CD14-positive monocyte (primary cell): ENCODE measurements at regions of chr11 and their contacts with region 1.

Region 1: GRCh38 chr11:102007567-102008437 is 39.4 kb upstream of the CFAP300 start:
- DNase-seq: peak in 1 of 3 donors; percentile 18
- H3K4me3 ChIP-seq: no peak overlapping the region
- H3K4me3 Mint-ChIP-seq: no peak overlapping the region
- H3K27ac ChIP-seq: no peak overlapping the region
- H3K27ac Mint-ChIP-seq: no peak overlapping the region
- H3K4me1 ChIP-seq: no peaks in the 10 kb centered on the region
- H3K4me1 Mint-ChIP-seq: no peaks in the 10 kb centered on the region
- H3K27me3 ChIP-seq: peaks cover 7 to 14% of the 10 kb centered on the region in 2 donors
- H3K27me3 Mint-ChIP-seq: peaks cover 6 to 13% (median 11%) of the 10 kb centered on the region in 3 donors
- CTCF ChIP-seq: peak; percentile 69

Region 2: DNA sequence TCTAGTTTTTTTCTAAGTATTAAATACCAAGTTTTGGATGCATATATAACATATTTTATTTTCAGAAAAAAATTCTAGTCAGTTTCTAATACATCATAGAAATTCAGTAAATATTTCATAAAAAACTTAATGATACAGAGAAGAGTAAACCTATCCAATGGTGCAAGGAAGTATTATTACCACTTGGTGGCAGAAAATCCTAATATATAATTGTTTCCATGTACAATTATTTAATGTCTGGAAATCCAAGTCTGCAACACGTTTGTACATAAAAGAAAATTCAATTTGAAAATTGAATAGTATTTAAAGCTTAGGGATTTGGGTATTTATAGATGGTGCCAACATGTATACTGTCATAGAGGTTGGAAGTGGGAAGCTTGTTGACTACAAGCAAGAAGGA is 551.0 kb before region 1 on chr11:
- intact Hi-C with region 1: loop called in 1 of 2 experiments (anchors 10 kb)
- DNase-seq: no peak
- H3K4me3 ChIP-seq: no peak overlapping the region
- H3K4me3 Mint-ChIP-seq: no peak overlapping the region
- H3K27ac ChIP-seq: no peak overlapping the region
- H3K27ac Mint-ChIP-seq: no peak overlapping the region
- H3K4me1 ChIP-seq: no peaks in the 10 kb centered on the region
- H3K4me1 Mint-ChIP-seq: no peaks in the 10 kb centered on the region
- H3K27me3 ChIP-seq: no peaks in the 10 kb centered on the region
- H3K27me3 Mint-ChIP-seq: peaks cover 0 to 1% (median 1%) of the 10 kb centered on the region in 3 donors
- CTCF ChIP-seq: no peak

Region 3: GRCh38 chr11:101583251-101584128 is 424.3 kb before region 1 on chr11 and contains the start of gene TRPC6:
- intact Hi-C with region 1: no loop called
- DNase-seq: no peak
- H3K4me3 ChIP-seq: no peak within 1 kb of the TSS
- H3K4me3 Mint-ChIP-seq: peak within 1 kb of the TSS in 1 of 2 donors; percentile 75
- H3K27ac ChIP-seq: no peak within 1 kb of the TSS
- H3K27ac Mint-ChIP-seq: no peak within 1 kb of the TSS
- H3K4me1 ChIP-seq: no peaks in the 10 kb centered on the region
- H3K4me1 Mint-ChIP-seq: no peaks in the 10 kb centered on the region
- H3K27me3 ChIP-seq: peaks cover 28 to 39% of the 10 kb centered on the region in 2 donors
- H3K27me3 Mint-ChIP-seq: peaks cover 33 to 44% (median 39%) of the 10 kb centered on the region in 3 donors
- CTCF ChIP-seq: no peak
- polyA plus RNA-seq, gene TRPC6: 0.01 TPM in 1 of 3 donors, not detected in the others

Region 4: DNA sequence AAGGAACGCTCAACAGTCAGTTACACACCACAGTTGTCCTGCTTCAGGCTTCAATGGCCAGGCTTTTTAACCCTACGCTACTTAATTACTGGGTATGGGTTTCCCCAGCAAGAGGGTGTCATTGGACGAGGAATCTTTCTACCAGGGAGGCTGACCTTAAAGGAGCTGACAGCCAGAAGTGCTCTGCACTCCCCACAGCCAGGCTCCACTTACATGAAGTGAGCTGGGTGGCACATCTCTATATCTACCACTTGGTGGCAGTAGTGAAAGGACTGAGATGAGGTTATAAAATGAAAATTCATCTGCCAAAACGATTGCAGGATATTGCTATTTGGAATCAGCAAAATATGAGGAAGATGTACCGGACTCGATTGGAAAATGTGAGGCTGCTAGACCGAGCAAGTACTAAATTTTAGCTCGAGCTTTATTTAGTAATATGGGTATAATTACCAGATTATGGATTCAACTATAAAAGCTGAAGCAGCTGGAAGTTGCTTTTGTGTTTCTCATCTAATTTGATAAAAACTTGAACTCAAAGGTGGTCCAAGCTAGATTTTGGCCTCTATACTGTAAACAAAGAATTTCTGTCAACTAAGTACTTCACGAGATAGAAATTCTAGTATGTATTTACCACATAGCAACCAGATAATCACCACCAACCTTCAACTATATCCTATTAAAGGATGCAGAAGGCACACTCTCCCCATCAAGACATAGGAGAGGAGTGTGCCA is 146.9 kb before region 1 on chr11:
- intact Hi-C with region 1: loop called (anchors 10 kb)
- DNase-seq: peak in 2 of 3 donors; percentile 2
- H3K4me3 ChIP-seq: no peak overlapping the region
- H3K4me3 Mint-ChIP-seq: no peak overlapping the region
- H3K27ac ChIP-seq: no peak overlapping the region
- H3K27ac Mint-ChIP-seq: no peak overlapping the region
- H3K4me1 ChIP-seq: no peaks in the 10 kb centered on the region
- H3K4me1 Mint-ChIP-seq: no peaks in the 10 kb centered on the region
- H3K27me3 ChIP-seq: no peaks in the 10 kb centered on the region
- H3K27me3 Mint-ChIP-seq: peaks cover 0 to 2% (median 0%) of the 10 kb centered on the region in 3 donors
- CTCF ChIP-seq: peak; percentile 56

Region 5: GRCh38 chr11:101929294-101929916 is 78.4 kb before region 1 on chr11:
- intact Hi-C with region 1: no loop called
- DNase-seq: no peak
- H3K4me3 ChIP-seq: no peak overlapping the region
- H3K4me3 Mint-ChIP-seq: no peak overlapping the region
- H3K27ac ChIP-seq: no peak overlapping the region
- H3K27ac Mint-ChIP-seq: no peak overlapping the region
- H3K4me1 ChIP-seq: no peaks in the 10 kb centered on the region
- H3K4me1 Mint-ChIP-seq: no peaks in the 10 kb centered on the region
- H3K27me3 ChIP-seq: no peaks in the 10 kb centered on the region
- H3K27me3 Mint-ChIP-seq: no peaks in the 10 kb centered on the region
- CTCF ChIP-seq: no peak

Region 6: GRCh38 chr11:102144357-102145342 is 136.8 kb after region 1 on chr11:
- intact Hi-C with region 1: no loop called
- DNase-seq: no peak
- H3K4me3 ChIP-seq: no peak overlapping the region
- H3K4me3 Mint-ChIP-seq: peak overlapping the region in 1 of 2 donors; percentile 30
- H3K27ac ChIP-seq: no peak overlapping the region
- H3K27ac Mint-ChIP-seq: no peak overlapping the region
- H3K4me1 ChIP-seq: no peaks in the 10 kb centered on the region
- H3K4me1 Mint-ChIP-seq: no peaks in the 10 kb centered on the region
- H3K27me3 ChIP-seq: peaks cover 6 to 13% of the 10 kb centered on the region in 2 donors
- H3K27me3 Mint-ChIP-seq: peaks cover 8 to 23% (median 10%) of the 10 kb centered on the region in 3 donors
- CTCF ChIP-seq: no peak